ENCODE measurements at regions of chr17 and their contacts with region 1.

Region 1: GRCh38 chr17:27654654-27655524 is 23.9 kb downstream of the LGALS9 start:
- DNase-seq: no peak
- H3K4me3 ChIP-seq: no peak overlapping the region
- H3K27ac ChIP-seq: no peak overlapping the region
- H3K4me1 ChIP-seq: no peaks in the 10 kb centered on the region
- H3K27me3 ChIP-seq: no peaks in the 10 kb centered on the region
- CTCF ChIP-seq: peak; percentile 54 to 85 (median 78)

Region 2: DNA sequence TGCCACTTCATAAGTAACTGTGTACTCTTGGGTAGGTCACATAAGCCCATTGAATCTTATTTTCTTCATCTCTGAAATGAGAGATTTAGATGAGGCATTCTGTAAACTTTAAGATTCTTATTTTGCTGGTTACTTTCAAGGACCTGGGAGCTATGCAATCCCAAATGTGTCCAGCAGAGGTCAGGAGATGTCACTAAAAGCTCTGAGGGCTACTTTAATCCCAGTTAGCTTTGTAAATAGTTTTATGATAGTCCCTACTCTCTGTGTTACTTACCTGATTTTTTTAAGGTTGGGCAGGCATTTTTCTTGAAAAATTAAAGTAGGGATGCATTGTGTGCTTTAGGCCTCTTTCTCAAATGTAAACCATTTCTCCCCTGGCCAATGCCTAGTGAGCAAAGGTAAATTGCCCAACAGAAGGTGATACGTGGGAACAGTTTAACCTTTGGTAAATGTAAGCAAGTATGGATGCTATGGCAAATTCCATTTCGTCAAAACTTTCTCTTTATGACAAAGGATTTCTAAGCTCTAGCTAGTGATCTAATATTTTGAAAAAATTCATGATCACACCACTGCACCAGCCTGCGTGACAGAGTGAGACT is 418.1 kb before region 1 on chr17:
- intact Hi-C with region 1: loop called (anchors 5 kb)
- DNase-seq: peak in 1 of 2 donors; percentile 94
- H3K4me3 ChIP-seq: no peak overlapping the region
- H3K27ac ChIP-seq: no peak overlapping the region
- H3K4me1 ChIP-seq: peaks cover 0 to 7% of the 10 kb centered on the region in 2 donors
- H3K27me3 ChIP-seq: no peaks in the 10 kb centered on the region
- CTCF ChIP-seq: peak; percentile 87 to 92 (median 89)

Region 3: GRCh38 chr17:27489045-27489715 is 165.7 kb before region 1 on chr17:
- intact Hi-C with region 1: no loop called
- DNase-seq: peak; percentile 30 to 84
- H3K4me3 ChIP-seq: no peak overlapping the region
- H3K27ac ChIP-seq: peak overlapping the region; percentile 15 to 42
- H3K4me1 ChIP-seq: peaks cover 0 to 10% of the 10 kb centered on the region in 2 donors
- H3K27me3 ChIP-seq: no peaks in the 10 kb centered on the region
- CTCF ChIP-seq: no peak

Region 4: GRCh38 chr17:27596566-27597187 is 58.2 kb before region 1 on chr17:
- intact Hi-C with region 1: no loop called
- DNase-seq: no peak
- H3K4me3 ChIP-seq: no peak overlapping the region
- H3K27ac ChIP-seq: peak overlapping the region in 1 of 2 donors; percentile 2
- H3K4me1 ChIP-seq: peaks cover 0 to 2% of the 10 kb centered on the region in 2 donors
- H3K27me3 ChIP-seq: no peaks in the 10 kb centered on the region
- CTCF ChIP-seq: no peak

Measured in ascending aorta (tissue), 2 donors.